Activated CD4-positive, alpha-beta T cell treated with anti-CD3 and anti-CD28 coated beads for 36 hours (primary cell): ENCODE measurements at regions of chr3 and their contacts with region 1.

Region 1: DNA sequence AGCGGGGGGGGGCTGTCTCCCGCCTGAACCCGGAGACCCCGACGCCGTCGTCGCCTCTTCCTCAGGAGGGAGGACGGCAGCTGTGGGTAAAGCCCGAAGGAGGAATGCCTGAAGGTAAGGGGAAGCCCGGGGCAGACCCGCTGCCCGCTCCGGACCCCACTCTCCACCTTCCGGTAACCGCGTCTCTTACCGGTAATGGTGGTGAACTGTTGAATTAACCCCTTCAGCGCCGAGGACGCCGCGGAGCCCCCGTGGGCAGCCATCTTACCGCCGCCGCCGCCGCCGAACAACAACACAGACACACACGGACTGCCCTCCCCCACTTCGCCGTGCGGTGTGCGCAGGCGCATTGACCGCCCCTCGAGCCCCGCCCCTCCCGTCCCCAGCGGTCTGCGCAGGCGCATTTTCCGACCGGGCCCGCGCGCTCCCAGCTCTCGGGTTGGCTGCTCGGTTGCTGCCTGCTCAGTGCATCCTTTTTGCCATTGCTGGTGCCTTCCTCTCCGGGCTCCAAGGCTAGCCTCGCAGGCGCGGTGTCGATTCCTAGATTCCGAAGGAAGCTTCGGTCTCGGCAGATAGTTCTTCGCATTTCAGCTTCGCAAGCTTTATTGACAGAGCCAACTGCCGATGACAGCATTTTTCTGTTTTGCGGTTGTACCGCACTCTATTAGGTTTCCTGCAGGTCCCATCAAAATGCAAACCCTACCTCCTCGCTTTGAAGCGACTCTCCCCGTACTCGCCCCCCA is at the start of gene UBXN7:
- DNase-seq: peak; percentile 98
- ATAC-seq: peak; percentile 89
- H3K4me3 Mint-ChIP-seq: peak within 1 kb of the TSS; percentile 79
- H3K27ac Mint-ChIP-seq: peak within 1 kb of the TSS; percentile 95
- H3K4me1 Mint-ChIP-seq: peaks cover 20% of the 10 kb centered on the region
- H3K27me3 Mint-ChIP-seq: no peaks in the 10 kb centered on the region
- total RNA-seq, gene UBXN7: 67.2 to 102 TPM

Region 2: GRCh38 chr3:196081791-196082618 is 350.3 kb before region 1 on chr3 and contains the start of gene TFRC:
- CTCF ChIA-PET with region 1: no interaction called
- POLR2A ChIA-PET with region 1: no interaction called
- intact Hi-C with region 1: loop called (anchors 1 to 10 kb)
- DNase-seq: peak; percentile 98
- ATAC-seq: peak; percentile 92
- H3K4me3 Mint-ChIP-seq: peak within 1 kb of the TSS; percentile 95
- H3K27ac Mint-ChIP-seq: peak within 1 kb of the TSS; percentile 93
- H3K4me1 Mint-ChIP-seq: peaks cover 30% of the 10 kb centered on the region
- H3K27me3 Mint-ChIP-seq: no peaks in the 10 kb centered on the region
- total RNA-seq, gene TFRC: 373 to 520 TPM

Region 3: DNA sequence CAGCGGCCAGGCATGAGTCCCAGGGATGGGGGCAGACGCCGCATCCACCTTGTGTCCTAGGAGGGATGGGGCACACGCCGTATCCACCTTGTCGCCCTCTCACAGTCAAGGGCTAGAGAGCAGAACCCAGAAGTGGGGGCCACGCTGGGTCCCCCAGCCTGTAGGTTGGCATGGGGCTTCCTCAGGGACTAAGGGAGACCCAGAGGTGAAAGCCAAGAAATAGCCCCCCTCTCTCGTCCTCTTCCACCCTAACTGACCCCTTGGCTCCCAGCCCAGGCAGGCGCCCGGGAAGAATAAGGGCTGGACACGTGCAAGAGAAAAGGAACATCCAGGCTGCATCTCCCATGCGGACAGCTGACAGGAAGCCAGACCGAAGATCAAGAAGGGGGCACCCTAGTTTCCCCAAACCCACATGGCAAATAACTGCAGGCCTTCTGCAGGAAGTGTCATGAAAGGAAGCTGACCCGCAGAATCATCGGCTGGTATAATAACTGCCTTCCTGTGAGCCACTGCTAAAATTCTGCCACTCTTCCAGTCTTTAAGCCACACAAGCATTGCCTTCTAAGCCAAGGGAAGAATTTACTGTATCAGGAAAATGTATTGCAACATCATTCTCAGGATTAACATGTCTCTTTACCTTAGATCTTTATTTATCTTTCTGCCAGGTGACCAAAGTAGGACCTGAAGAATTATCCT is 311.9 kb before region 1 on chr3:
- CTCF ChIA-PET with region 1: no interaction called
- POLR2A ChIA-PET with region 1: no interaction called
- intact Hi-C with region 1: no loop called
- DNase-seq: no peak
- ATAC-seq: peak; percentile 44
- H3K4me3 Mint-ChIP-seq: no peak overlapping the region
- H3K27ac Mint-ChIP-seq: no peak overlapping the region
- H3K4me1 Mint-ChIP-seq: peaks cover 17% of the 10 kb centered on the region
- H3K27me3 Mint-ChIP-seq: no peaks in the 10 kb centered on the region

Region 4: GRCh38 chr3:196274585-196274984 is 157.7 kb before region 1 on chr3:
- CTCF ChIA-PET with region 1: no interaction called
- POLR2A ChIA-PET with region 1: no interaction called
- intact Hi-C with region 1: loop called (anchors 1 to 2 kb)
- DNase-seq: peak; percentile 79
- ATAC-seq: peak; percentile 84
- H3K4me3 Mint-ChIP-seq: peak overlapping the region; percentile 56
- H3K27ac Mint-ChIP-seq: peak overlapping the region; percentile 95
- H3K4me1 Mint-ChIP-seq: peaks cover 65% of the 10 kb centered on the region
- H3K27me3 Mint-ChIP-seq: no peaks in the 10 kb centered on the region

Region 5: DNA sequence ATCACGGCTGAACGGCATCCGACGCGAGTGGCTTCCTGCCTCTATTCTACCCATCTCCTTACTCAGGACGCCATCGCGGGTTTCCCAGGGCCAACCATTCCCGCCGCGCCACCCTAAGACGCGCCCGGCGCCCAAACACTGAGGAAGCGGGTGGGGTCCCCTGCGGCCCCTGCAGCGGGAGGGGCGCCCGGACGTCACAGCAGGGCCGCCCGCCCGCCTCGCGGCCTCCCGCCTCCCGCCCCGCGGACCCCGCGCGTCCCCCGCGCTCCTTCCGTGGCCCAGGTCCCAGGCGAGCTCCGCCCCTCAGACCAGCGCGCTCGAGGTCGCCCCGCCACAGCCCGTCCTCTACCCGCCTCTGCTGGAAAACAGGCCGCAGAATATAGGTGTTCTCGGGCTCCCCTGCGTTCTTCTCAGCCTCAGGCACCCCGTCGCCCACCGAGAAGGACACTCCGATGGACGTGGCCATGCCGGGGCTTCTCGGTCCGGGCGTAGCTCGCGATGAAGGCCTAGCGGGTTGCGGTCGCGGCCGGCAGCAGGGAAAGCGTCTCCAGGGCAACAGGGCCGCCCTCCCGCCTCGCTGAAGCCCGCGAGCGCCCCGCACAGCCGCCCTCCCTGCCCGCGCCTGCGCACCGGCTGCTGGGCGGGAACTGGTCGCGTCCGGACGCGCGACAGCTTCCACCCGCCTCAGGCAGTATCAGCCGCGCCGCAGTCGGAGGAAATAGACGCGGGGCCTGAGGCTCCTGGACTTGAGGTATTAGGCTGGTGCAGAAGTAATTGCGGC is 114.4 kb before region 1 on chr3 and contains the start of gene DYNLT2B:
- CTCF ChIA-PET with region 1: interaction called, 3 read pairs
- POLR2A ChIA-PET with region 1: no interaction called
- intact Hi-C with region 1: loop called (anchors 1 to 5 kb)
- DNase-seq: peak; percentile 93
- ATAC-seq: peak; percentile 92
- H3K4me3 Mint-ChIP-seq: peak within 1 kb of the TSS; percentile 91
- H3K27ac Mint-ChIP-seq: peak within 1 kb of the TSS; percentile 95
- H3K4me1 Mint-ChIP-seq: peaks cover 12% of the 10 kb centered on the region
- H3K27me3 Mint-ChIP-seq: no peaks in the 10 kb centered on the region
- total RNA-seq, gene DYNLT2B: 7.3 to 16.3 TPM

Region 6: DNA sequence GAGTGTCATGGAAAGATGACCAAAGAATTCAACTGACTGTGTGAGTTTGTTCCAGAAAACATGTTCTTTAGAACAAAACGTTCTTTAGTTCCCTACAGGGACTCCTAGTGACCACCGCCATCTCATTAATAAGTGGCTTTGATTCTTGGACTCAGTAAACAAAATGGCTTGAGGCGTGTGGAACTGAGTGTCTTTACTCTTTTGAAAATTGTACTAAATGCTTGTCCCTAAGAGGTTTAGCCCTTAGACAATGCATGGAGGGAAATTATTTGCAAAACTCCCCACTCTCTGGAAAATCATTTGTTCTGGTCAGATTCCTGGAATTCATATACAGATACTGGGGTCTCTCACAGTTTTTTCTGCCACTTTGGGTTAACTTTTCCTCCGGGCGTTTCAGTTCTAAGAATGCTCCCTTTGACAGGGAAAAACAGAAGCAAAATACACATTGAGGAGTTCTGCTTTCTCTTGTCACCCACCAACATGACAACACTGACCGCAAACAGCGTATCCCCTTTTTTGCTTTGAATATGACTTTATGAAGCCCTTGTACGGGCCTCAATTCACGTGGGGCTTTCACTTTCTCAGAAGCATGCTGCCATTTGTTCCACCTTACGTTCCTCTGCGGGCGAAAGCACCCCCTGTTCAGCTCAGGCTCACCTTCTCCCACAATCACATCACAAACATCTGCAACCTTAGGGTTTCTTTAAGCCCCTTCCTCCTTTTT is 191.9 kb after region 1 on chr3:
- CTCF ChIA-PET with region 1: no interaction called
- POLR2A ChIA-PET with region 1: no interaction called
- intact Hi-C with region 1: no loop called
- DNase-seq: peak; percentile 74
- ATAC-seq: peak; percentile 73
- H3K4me3 Mint-ChIP-seq: peak overlapping the region; percentile 53
- H3K27ac Mint-ChIP-seq: peak overlapping the region; percentile 84
- H3K4me1 Mint-ChIP-seq: peaks cover 45% of the 10 kb centered on the region
- H3K27me3 Mint-ChIP-seq: no peaks in the 10 kb centered on the region